Prostate gland (tissue), 2 donors: ENCODE measurements at regions of chr21 and their contacts with region 1.

Region 1: DNA sequence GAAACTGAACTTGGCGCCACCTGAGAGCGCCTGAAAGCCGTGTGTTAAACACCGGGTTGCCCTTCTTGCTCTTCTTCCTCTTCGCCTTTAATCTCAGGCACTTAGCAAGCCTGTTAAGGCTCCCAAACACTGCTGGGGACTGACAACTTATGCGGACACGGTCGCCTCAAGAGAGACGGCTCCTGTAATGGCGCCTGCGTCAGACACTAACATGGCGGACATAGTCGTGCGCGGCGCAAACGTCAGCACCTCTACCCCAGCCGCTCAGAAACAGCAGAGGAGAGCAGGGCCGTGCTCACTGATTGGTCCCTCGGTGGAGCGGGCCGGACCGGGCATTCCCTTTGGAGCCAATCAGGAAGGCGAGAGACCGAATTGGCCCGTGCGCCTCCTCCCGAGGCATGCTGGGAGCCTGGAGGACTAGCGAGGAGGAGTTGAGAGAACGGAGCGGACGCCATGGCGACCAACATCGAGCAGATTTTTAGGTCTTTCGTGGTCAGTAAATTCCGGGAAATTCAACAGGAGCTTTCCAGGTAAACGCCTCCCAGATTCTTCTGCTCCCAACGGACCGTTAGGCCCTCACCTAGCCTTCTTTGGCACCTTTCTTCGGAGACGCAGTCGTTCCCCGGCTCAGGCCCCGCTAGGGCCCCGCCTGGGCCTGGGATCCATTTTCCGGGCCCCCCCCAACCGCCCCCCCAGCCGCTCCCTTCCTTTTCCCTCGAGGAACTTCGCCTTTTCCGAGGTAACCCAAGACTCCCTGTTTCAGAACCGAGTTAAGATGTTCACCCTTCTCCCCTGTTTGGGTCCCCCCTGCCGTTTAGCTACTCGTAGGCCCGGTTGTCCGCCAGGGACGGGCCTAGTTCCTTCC is at the start of gene SON:
- DNase-seq: peak; percentile 99
- H3K4me3 ChIP-seq: peak within 1 kb of the TSS; percentile 63 to 65
- H3K27ac ChIP-seq: peak within 1 kb of the TSS; percentile 99
- H3K4me1 ChIP-seq: peaks cover 5% of the 10 kb centered on the region
- H3K27me3 ChIP-seq: no peaks in the 10 kb centered on the region
- CTCF ChIP-seq: peak in 1 of 4 experiments; percentile 4
- POLR2A ChIP-seq: peak; percentile 95
- total RNA-seq, gene SON: 213 to 222 TPM

Region 2: DNA sequence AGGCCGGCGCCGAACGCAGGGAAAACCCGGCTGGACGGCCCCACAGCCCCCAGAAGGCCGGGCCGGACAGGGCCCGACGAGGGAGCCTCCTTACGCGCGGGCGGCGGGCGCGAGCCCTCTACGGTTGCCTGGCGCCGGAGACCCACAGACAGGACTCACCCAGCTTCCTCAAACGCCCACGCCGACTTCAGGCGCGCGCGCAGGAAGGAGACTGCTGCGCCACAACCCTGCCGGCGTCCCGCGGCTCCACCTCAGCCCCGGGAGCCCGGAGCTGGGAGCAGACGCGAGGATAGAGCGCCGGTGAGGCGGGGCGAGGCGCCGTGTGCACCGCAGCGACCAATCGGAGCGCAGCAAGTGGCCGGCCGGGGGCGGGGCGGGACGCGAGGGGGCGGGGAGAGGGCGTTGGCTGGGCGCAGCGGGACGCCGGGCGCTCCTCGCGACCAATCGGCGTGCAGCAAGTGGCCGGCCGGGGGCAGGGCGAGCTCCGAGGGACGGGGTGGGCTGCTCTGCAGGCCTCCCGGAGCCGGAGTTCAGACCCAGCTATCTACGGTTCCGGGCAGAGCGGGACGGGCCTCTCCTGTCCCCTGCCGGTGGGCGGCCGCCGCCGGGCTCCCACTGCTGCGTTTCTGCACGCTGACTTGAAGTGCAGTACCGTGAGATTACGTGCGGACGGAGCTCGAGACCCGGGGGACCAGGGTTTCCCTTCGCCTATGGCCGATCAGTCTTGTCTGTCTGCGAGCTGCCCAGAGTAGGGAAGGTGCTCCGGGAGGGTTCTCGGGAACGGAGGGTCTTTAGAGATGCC is 63.0 kb before region 1 on chr21 and contains the start of gene TMEM50B:
- intact Hi-C with region 1: loop called (anchors 2 kb)
- DNase-seq: peak; percentile 96
- H3K4me3 ChIP-seq: peak within 1 kb of the TSS; percentile 84 to 94
- H3K27ac ChIP-seq: peak within 1 kb of the TSS; percentile 84 to 94
- H3K4me1 ChIP-seq: peaks cover 4% of the 10 kb centered on the region
- H3K27me3 ChIP-seq: no peaks in the 10 kb centered on the region
- CTCF ChIP-seq: peak; percentile 23 to 70 (median 54)
- POLR2A ChIP-seq: peak; percentile 93
- total RNA-seq, gene TMEM50B: 65.9 to 67.4 TPM